A549 (cell line): ENCODE measurements at regions of chr15 and their contacts with region 1.

Region 1: GRCh38 chr15:45457641-45458433 is 64.7 kb downstream of the SLC30A4 start:
- DNase-seq: peak; percentile 41 to 71
- ATAC-seq: peak; percentile 61 to 78
- H3K4me3 ChIP-seq: peak overlapping the region; percentile 47
- H3K27ac ChIP-seq: peak overlapping the region; percentile 84 to 96
- H3K4me1 ChIP-seq: peaks cover 32% of the 10 kb centered on the region
- CTCF ChIP-seq: peak; percentile 80
- EP300 ChIP-seq: no peak
- POLR2A ChIP-seq: no peak
- RAD21 ChIP-seq: peak; percentile 90 to 91

Region 2: DNA sequence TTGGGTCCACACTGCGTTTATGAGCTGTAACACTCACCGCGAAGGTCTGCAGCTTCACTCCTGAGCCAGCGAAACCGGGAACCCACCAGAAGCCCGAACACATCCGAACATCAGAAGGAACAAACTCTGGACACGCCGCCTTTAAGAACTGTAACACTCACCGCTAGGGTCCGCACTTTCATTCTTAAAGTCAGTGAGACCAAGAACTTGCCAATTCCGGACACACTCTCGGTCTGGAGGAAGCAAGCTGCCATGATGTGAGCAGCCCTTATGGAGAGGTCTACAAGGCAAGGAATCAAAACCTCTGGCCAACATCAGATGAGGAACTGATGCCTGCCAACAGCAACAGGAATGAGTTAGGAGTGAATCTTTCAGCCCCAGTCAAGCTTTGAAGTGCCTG is 142.9 kb before region 1 on chr15:
- CTCF ChIA-PET with region 1: no interaction called
- POLR2A ChIA-PET with region 1: no interaction called
- DNase-seq: peak in 1 of 2 experiments; percentile 66
- ATAC-seq: peak; percentile 47 to 78; a peak in 4 of 6 replicates
- H3K4me3 ChIP-seq: no peak overlapping the region
- H3K27ac ChIP-seq: no peak overlapping the region
- H3K4me1 ChIP-seq: no peaks in the 10 kb centered on the region
- CTCF ChIP-seq: 0 out of 3 replicates have a peak, but pooled peaks have one; percentile 13
- EP300 ChIP-seq: no peak
- POLR2A ChIP-seq: no peak
- RAD21 ChIP-seq: peak in 1 of 2 experiments; percentile 19; a peak in 1 of 5 replicates

Region 3: DNA sequence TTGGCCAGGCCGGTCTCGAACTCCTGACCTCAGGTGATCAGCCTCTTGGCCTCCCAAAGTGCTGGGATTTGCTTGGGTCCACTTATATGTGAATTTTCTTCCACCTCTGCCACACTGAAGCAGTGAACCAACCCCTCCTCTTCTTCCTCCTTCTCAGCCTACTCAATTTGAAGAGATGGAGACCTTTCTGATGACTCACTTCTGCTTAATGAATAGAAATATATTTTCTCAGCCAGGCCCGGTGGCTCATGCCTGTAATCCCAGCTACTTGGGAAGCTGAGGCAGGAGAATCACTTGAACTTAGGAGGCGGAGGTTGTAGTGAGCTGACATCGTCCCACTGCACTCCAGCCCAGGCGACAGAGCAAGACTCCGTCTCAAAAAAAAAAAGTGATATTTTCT is 32.7 kb before region 1 on chr15:
- CTCF ChIA-PET with region 1: interaction called, 120 read pairs
- POLR2A ChIA-PET with region 1: no interaction called
- DNase-seq: no peak
- ATAC-seq: no peak
- H3K4me3 ChIP-seq: no peak overlapping the region
- H3K27ac ChIP-seq: no peak overlapping the region
- H3K4me1 ChIP-seq: no peaks in the 10 kb centered on the region
- CTCF ChIP-seq: no peak
- EP300 ChIP-seq: no peak
- POLR2A ChIP-seq: no peak
- RAD21 ChIP-seq: no peak

Region 4: DNA sequence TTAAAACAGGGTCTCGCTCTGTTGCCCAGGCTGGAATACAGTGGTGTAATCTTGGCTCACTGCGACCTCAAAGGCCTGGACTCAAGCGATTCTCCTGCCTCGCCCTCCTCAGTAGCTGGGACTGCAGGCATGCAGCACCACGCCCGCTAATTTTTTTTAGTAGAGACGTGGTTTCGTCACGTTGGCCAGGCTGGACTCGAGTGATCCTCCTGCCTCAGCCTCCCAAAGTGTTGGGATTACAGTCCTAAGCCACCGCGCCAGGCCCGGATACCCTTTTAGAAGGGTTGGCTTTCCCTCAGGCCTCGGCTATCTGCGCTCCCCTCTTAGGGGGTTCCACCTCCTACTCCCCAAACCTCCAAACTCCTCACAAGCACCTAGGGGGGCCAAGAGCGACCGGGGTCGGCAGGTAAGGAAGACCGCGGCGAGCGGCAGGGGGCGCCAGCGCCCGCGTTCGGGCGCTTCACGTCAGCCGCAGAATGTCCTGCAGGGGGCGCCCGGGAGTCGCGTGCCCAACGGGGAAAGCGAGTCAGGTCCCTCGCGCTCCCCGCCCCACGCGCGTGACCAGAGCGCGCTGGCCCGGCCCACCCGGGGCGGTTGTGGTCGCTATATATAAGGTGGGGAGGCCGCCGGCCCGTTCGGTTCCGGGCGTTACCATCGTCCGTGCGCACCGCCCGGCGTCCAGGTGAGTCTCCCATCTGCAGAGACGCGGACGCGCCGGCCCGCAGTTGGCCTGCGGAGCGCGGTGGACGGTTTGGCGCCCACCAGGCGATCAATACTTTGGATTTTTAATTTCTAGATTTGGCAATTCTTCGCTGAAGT is 27.7 kb before region 1 on chr15:
- CTCF ChIA-PET with region 1: interaction called, 120 read pairs
- POLR2A ChIA-PET with region 1: no interaction called
- DNase-seq: peak; percentile 34 to 49
- ATAC-seq: peak; percentile 93 to 96
- H3K4me3 ChIP-seq: peak overlapping the region; percentile 58
- H3K27ac ChIP-seq: peak overlapping the region; percentile 57 to 83; a peak in 5 of 6 replicates
- H3K4me1 ChIP-seq: 0 out of 3 replicates have a peak, but pooled peaks cover 4% of the 10 kb centered on the region
- CTCF ChIP-seq: peak; percentile 99
- EP300 ChIP-seq: no peak
- POLR2A ChIP-seq: no peak
- RAD21 ChIP-seq: peak; percentile 77 to 97

Region 5: DNA sequence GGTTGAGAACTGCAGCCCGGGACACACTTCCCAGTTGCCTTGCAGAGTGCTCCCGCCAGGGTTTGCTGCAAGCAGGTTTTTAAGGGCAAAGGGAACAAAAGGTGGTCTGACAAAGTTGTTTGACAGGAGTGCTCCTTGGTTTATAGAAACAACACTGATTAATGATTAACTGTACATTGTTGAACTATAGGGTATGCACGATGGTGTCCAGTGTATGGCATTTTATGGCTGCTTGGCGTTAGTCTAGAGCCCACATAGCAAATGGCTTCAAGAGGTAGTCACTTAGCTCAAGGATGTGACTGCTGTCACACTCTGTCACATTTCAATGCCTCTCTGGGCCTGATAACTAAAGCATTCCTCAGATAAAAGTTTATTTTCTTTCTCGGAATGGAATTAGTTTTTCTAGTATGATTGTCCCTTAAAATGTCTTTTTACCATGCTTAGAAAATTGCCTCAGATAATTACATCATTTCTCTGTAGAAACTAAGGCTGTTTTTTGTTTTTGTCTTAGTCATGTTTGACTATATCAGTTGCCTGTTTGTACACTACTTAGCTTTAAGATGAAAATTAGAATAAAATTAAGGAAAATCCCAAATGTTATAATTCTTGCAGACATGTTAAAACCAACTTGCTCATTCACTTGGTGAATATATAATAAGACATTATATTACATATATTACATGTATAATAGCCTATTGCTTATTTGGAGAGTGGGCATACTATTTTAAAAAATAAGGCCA is 18.1 kb before region 1 on chr15:
- CTCF ChIA-PET with region 1: interaction called, 41 read pairs
- POLR2A ChIA-PET with region 1: interaction called, 3 read pairs
- DNase-seq: no peak
- ATAC-seq: no peak
- H3K4me3 ChIP-seq: no peak overlapping the region
- H3K27ac ChIP-seq: no peak overlapping the region
- H3K4me1 ChIP-seq: peaks cover 26% of the 10 kb centered on the region
- CTCF ChIP-seq: no peak
- EP300 ChIP-seq: no peak
- POLR2A ChIP-seq: no peak
- RAD21 ChIP-seq: no peak

Region 6: DNA sequence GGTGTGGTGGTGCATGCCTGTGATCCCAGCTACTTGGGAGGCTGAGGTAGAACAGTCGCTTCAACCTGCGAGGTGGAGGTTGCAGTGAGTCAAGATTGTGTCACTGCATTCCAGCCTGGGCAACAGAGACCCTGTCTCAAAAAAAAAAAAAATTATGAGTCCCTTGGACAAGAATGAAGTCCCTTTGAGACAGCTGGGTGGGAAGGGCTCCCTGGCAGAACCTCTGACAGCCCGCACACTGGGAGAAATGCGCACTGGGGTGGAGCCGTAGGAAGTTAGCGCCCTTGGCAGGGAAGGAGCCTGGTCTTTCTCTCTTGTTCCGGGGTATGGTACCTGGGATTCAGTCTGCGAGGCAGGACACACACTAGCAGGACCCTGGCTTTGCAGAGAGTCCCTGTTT is 13.3 kb after region 1 on chr15:
- CTCF ChIA-PET with region 1: interaction called, 20 read pairs
- POLR2A ChIA-PET with region 1: no interaction called
- DNase-seq: no peak
- ATAC-seq: no peak
- H3K4me3 ChIP-seq: no peak overlapping the region
- H3K27ac ChIP-seq: no peak overlapping the region
- H3K4me1 ChIP-seq: no peaks in the 10 kb centered on the region
- CTCF ChIP-seq: no peak
- EP300 ChIP-seq: no peak
- POLR2A ChIP-seq: no peak
- RAD21 ChIP-seq: no peak

Region 7: DNA sequence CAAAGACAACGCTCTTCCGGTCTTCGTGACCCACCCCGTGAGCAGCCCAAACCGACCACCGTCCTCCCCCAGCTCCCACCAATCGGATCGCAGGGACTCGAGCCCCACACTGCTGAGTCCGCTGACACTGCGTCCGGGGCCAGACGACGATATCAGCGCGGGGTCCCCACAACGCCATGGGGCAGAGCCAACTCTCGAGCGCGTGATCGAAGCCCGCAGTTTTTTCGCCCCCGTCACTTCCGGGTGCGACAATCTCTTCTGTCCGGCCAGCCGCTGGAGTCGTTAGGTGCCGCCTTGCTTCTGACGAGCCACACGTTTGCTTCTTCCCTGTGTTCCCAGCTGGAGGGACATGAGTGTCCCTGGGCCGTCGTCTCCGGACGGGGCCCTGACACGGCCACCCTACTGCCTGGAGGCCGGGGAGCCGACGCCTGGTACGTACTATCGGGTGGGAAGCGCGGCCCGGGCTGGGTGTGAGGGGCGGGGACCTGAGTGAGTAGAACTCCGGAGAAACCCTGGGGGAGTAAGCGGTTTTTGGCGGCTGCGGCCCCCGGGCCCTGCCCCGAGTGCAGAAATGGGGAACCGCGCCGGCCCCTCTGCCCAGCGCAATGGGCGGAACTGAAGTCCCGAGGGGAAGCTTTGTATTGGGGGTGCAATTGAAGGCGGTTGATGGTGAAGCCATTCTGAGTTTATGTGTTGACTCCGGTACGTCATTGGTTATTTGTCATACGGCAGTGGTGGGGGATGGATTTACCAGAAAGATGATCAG is 129.4 kb after region 1 on chr15 and contains the start of gene BLOC1S6:
- CTCF ChIA-PET with region 1: interaction called, 21 read pairs
- POLR2A ChIA-PET with region 1: no interaction called
- DNase-seq: peak; percentile 50 to 90
- ATAC-seq: peak; percentile 90 to 94
- H3K4me3 ChIP-seq: peak within 1 kb of the TSS; percentile 75
- H3K27ac ChIP-seq: peak within 1 kb of the TSS; percentile 95 to 98
- H3K4me1 ChIP-seq: peaks cover 23% of the 10 kb centered on the region; the same call in 2 of the 3 replicates
- CTCF ChIP-seq: no peak
- EP300 ChIP-seq: no peak
- POLR2A ChIP-seq: peak; percentile 72
- RAD21 ChIP-seq: no peak
- polyA plus RNA-seq, gene BLOC1S6: 14.2 and 19.0 TPM in 2 replicates

Region 8: DNA sequence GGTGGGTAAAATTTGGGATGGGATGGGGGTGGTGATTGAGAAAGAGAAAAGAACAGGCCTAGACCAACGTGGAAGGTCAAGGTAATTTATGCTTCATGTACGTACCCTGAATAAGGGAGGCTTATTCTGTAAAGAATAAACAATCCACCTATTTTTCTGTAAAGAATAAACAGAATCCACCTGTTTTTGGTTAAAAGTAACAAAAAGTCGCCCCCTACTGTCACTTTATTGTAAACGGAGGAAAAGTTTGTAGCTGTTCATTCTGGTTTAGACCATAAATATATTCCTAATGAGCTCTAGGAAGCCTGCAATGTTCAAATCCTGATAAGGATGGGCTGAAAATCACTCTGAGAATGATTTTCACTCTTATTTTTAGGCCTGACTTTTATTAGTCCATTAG is 153.5 kb after region 1 on chr15:
- CTCF ChIA-PET with region 1: interaction called, 81 read pairs
- POLR2A ChIA-PET with region 1: no interaction called
- DNase-seq: peak in 1 of 2 experiments; percentile 29
- ATAC-seq: peak in 1 of 2 experiments; percentile 49; a peak in 3 of 6 replicates
- H3K4me3 ChIP-seq: no peak overlapping the region
- H3K27ac ChIP-seq: no peak overlapping the region
- H3K4me1 ChIP-seq: peaks cover 4% of the 10 kb centered on the region; the same call in 2 of the 3 replicates
- CTCF ChIP-seq: peak; percentile 59
- EP300 ChIP-seq: no peak
- POLR2A ChIP-seq: no peak
- RAD21 ChIP-seq: peak; percentile 53 to 58; a peak in 4 of 5 replicates